GM12878 (cell line): ENCODE measurements at regions of chr15 and their contacts with region 1.

Region 1: GRCh38 chr15:54594115-54594514 is 602.6 kb downstream of the RSL24D1 start:
- DNase-seq: no peak
- ATAC-seq: peak; percentile 22
- H3K4me3 ChIP-seq: no peak overlapping the region
- H3K27ac ChIP-seq: no peak overlapping the region
- H3K4me1 ChIP-seq: no peaks in the 10 kb centered on the region
- H3K27me3 ChIP-seq: no peaks in the 10 kb centered on the region
- CTCF ChIP-seq: no peak
- EP300 ChIP-seq: no peak
- POLR2A ChIP-seq: no peak
- RAD21 ChIP-seq: no peak

Region 2: GRCh38 chr15:54605043-54605442 is 10.9 kb after region 1 on chr15:
- CTCF ChIA-PET with region 1: interaction called, 14 read pairs
- POLR2A ChIA-PET with region 1: interaction called, 3 read pairs
- RAD21 ChIA-PET with region 1: interaction called, 6 read pairs
- SMC1A ChIA-PET with region 1: interaction called, 21 read pairs
- in situ Hi-C with region 1: no loop called
- intact Hi-C with region 1: no loop called
- DNase-seq: no peak
- ATAC-seq: no peak; the same call in 2 of the 3 replicates
- H3K4me3 ChIP-seq: no peak overlapping the region
- H3K27ac ChIP-seq: no peak overlapping the region
- H3K4me1 ChIP-seq: no peaks in the 10 kb centered on the region
- H3K27me3 ChIP-seq: no peaks in the 10 kb centered on the region
- CTCF ChIP-seq: no peak
- EP300 ChIP-seq: no peak
- POLR2A ChIP-seq: no peak
- RAD21 ChIP-seq: no peak

Region 3: DNA sequence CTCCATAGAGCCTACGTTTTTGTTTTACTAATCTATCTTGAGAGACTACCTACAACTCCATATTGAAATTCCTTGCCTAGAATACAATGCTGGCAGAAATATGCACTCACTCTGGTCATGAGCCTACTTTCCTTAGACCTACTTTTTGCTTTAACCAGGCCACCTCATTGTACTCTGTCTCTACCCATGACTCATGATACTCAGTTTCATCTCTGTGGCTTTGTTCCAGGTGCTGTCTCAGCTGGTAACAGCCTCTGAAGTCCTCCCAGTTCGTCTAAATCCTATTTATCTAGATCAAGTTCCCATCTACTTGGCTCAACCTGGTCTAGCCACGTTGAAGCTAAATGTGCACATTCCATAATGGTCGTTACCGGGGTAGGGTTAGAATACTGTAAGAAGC is 66.2 kb after region 1 on chr15:
- CTCF ChIA-PET with region 1: no interaction called
- POLR2A ChIA-PET with region 1: no interaction called
- RAD21 ChIA-PET with region 1: no interaction called
- SMC1A ChIA-PET with region 1: no interaction called
- in situ Hi-C with region 1: no loop called
- intact Hi-C with region 1: no loop called
- DNase-seq: no peak
- ATAC-seq: no peak; the same call in 2 of the 3 replicates
- H3K4me3 ChIP-seq: no peak overlapping the region
- H3K27ac ChIP-seq: no peak overlapping the region
- H3K4me1 ChIP-seq: no peaks in the 10 kb centered on the region
- H3K27me3 ChIP-seq: no peaks in the 10 kb centered on the region
- CTCF ChIP-seq: no peak
- EP300 ChIP-seq: no peak
- POLR2A ChIP-seq: no peak
- RAD21 ChIP-seq: no peak